ENCODE measurements at regions of chr5 and their contacts with region 1.

Region 1: GRCh38 chr5:119332978-119333401 is 22.8 kb upstream of the TNFAIP8 start:
- DNase-seq: no peak
- ATAC-seq: no peak
- H3K4me3 ChIP-seq: no peak overlapping the region
- H3K27ac ChIP-seq: no peak overlapping the region
- H3K4me1 ChIP-seq: no peaks in the 10 kb centered on the region
- H3K27me3 ChIP-seq: no peaks in the 10 kb centered on the region

Region 2: DNA sequence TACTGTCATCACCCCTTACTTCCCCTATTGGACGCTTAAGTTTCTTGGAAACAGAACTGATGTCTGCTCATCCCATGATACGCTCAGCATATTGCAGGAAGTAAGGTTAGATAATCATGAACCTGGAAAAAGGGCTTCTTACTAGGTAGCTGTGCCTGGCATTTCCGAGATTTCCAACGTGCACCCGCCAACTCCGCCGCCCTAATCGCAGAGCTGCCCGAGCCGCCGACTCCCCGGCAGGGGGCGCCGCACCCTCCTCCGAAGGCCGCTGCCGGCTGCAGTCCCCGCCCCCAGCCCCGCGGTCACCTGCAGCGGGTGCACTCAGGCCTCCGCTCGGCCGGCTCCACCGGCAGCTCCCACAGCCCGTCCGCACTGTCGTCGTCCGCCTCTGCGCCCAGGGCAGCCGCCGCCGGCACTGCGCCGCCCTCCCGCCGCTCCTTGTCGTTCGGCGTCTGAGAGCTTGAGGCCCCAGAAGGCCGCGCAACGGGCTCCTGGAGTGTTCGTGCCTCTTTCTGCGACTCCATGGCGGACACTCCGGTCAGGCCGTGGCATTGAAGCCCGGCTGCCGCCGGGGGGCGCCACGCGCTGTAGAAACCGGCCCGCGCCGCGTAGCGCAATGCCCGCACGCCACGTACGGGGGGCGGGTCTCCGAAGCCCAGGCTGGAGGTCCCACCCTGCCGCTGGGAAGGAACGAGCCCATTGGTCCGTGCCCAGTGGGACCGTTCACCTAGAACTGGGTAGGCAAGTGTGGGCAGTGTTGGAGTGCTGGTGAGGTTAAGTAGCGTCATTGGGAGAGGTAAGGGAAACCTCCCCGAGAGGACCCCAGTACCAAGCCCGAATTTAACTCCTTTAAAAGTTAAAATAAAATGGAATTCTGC is 344.8 kb before region 1 on chr5 and contains the start of gene DTWD2:
- intact Hi-C with region 1: loop called (anchors 10 kb)
- DNase-seq: peak; percentile 95 to 98
- ATAC-seq: peak; percentile 100
- H3K4me3 ChIP-seq: peak within 1 kb of the TSS; percentile 54 to 61
- H3K27ac ChIP-seq: peak within 1 kb of the TSS in 1 of 2 donors; percentile 82
- H3K4me1 ChIP-seq: no peaks in the 10 kb centered on the region
- H3K27me3 ChIP-seq: no peaks in the 10 kb centered on the region
- total RNA-seq, gene DTWD2: 4.1 to 6.3 TPM

Region 3: DNA sequence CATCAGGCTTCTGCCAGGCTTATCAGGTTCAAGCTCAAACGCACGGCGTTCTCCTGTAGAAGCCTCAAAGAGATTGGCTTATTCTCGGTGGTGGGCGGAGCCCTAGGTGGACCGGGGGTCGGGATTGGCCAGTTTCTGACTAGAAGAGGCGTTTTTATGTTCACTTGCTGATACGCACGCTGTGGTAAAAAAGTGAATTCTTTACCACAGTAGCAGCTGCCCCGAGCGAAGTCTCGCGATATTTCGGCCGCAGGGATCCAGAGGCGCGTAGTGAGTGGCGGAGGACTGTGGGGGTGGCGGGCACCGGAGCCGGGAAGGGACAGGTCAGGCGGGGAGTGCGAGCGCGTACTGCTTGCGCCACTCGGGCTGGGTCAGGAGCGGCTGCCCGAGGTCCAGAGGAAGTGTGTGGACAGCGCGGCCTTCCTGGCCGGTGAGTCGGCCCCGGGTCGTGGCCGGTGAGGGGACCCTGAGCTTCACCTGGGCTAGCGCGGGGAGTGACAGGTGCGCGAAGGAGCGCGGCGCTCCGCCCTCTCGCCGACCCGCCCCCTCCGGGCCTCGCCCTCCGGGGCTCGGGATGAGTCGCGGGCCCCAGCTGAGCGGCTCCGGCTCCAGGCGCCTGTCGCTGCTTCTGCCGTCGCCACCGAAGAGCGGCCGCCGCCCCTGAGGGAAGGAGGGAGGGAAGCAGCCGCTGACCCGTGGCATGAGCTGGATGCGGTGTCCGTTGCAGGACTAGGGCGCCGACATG is 262.0 kb before region 1 on chr5 and contains the start of gene DMXL1:
- intact Hi-C with region 1: loop called in 1 of 2 experiments (anchors 2 kb)
- DNase-seq: peak; percentile 100
- ATAC-seq: peak; percentile 99
- H3K4me3 ChIP-seq: peak within 1 kb of the TSS; percentile 79 to 81
- H3K27ac ChIP-seq: peak within 1 kb of the TSS; percentile 52 to 65
- H3K4me1 ChIP-seq: peaks cover 0 to 4% of the 10 kb centered on the region in 2 donors
- H3K27me3 ChIP-seq: no peaks in the 10 kb centered on the region
- total RNA-seq, gene DMXL1: 50.8 to 69.7 TPM

Region 4: GRCh38 chr5:119267958-119268386 is 65.0 kb before region 1 on chr5:
- intact Hi-C with region 1: loop called (anchors 2 to 5 kb)
- DNase-seq: peak; percentile 96 to 97
- ATAC-seq: peak; percentile 93
- H3K4me3 ChIP-seq: peak overlapping the region; percentile 63 to 71
- H3K27ac ChIP-seq: peak overlapping the region; percentile 45 to 88
- H3K4me1 ChIP-seq: no peaks in the 10 kb centered on the region
- H3K27me3 ChIP-seq: no peaks in the 10 kb centered on the region

Region 5: DNA sequence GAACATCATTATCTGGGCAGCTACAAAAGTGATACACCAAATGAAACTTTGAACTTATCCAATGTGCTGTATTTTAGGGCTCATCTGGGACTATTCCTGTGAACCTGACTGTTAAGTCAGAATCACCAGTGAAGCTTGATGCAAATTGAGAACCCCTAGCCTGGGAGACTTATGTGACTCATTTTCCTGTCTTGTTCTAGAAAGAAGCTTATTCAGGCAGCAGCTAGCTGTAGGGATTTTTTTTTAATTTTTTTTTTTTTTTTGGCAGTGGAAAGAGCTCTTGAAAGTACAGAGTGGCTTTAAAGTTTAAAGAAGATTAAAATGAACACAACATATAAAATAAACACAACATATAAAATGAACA is 58.2 kb before region 1 on chr5:
- intact Hi-C with region 1: loop called (anchors 2 to 5 kb)
- DNase-seq: no peak
- ATAC-seq: peak; percentile 57
- H3K4me3 ChIP-seq: no peak overlapping the region
- H3K27ac ChIP-seq: peak overlapping the region in 1 of 2 donors; percentile 28
- H3K4me1 ChIP-seq: peaks cover 2 to 9% of the 10 kb centered on the region in 2 donors
- H3K27me3 ChIP-seq: no peaks in the 10 kb centered on the region

Region 6: GRCh38 chr5:119411935-119412602 is 79.1 kb after region 1 on chr5:
- intact Hi-C with region 1: loop called (anchors 5 kb)
- DNase-seq: peak; percentile 68 to 78
- ATAC-seq: peak; percentile 96
- H3K4me3 ChIP-seq: peak overlapping the region; percentile 49 to 90
- H3K27ac ChIP-seq: peak overlapping the region in 1 of 2 donors; percentile 42
- H3K4me1 ChIP-seq: no peaks in the 10 kb centered on the region
- H3K27me3 ChIP-seq: no peaks in the 10 kb centered on the region

Measured in aorta (tissue), 5 donors.